BJ (cell line): ENCODE measurements at regions of chr2 and their contacts with region 1.

Region 1: DNA sequence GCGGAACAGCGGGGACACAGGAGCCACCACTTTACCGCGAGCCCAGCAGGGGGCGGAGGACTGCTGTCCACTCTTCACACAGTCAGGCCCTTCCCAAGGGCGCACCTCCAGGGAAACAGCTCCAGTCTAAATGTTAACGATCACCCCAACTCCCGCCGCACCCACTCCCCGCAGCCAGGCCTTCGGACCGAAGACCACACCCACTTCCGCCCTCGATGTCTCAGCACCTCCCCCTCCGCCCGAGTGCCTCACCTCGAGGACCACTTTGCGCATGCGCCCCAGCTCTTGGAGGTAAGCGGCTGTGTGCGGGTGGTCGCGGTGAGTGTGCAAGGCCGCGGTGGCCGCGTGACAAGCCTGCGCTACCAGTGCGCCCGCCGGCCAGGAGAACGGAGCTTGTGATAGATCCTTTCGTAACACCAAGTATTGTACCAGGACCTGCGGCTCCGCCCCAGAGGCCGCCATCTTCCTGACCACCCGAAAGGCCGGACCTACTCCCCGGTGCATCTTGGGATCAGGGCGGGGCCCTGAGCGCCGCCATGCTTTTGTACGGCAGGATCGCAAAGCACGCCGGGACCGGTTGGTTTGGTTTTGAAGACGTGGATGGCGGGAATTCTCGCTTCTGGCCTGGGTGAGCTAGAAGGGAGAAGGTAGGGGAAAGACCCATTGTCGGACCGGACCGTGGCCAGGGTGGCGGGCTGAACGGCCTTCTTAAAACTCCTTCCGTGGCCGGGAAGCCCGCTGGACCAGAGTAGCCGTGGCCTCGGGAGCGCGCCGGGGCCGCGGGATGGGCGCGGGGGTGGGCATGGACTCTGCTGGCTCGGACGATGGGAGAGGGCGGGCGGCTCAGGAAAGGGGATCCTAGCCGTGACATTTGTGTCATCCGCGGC is at the starts of genes CENPO and PTRHD1:
- DNase-seq: peak; percentile 78
- H3K4me3 ChIP-seq: peak within 1 kb of the TSS; percentile 80
- H3K27me3 ChIP-seq: no peaks in the 10 kb centered on the region
- CTCF ChIP-seq: peak; percentile 67
- polyA plus RNA-seq, gene CENPO: 18.2 and 19.4 TPM in 2 replicates
- polyA plus RNA-seq, gene PTRHD1: 44.5 and 59.2 TPM in 2 replicates

Region 2: DNA sequence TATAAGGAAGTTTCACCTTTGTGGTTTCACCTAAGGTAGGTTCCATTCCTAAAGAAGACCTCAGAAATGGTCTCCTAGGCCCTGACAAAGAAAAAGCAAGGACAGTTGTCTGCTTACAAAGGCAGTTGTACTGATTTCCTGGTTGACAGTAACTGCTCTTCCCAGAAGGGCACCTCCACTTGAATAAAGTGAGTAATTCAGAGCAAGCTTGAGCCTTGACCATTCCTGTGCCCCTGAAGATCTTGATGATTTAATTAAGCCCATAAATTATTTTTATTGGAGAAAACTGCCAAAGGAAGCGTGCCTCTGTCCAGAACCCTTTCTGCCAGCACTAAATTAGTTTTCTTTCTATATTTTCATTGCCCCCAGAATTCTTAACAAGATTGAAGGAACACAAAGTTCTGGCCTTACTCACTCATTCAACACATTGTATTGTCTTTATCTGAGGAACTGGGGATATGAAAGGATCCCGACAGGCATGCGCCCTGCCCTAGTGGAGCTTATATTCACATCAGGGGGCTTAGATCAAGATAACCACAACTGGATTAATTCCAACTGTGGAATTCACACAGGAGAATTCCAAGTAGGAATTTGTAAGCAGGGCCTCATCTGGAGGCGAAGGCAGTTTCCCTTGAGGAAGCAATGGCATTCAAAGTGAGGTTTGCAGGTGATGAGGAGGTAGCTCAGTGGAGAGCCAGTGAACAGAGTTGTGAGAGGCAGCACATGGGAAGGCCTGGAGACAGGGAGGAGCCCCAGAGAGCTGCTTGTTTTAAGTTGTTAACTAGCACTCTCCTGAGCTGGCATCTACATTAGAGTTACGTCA is 21.1 kb before region 1 on chr2:
- CTCF ChIA-PET with region 1: interaction called, 21 read pairs
- POLR2A ChIA-PET with region 1: no interaction called
- DNase-seq: no peak
- H3K4me3 ChIP-seq: no peak overlapping the region
- H3K27me3 ChIP-seq: no peaks in the 10 kb centered on the region
- CTCF ChIP-seq: no peak

Region 3: GRCh38 chr2:24779116-24779515 is 14.0 kb before region 1 on chr2:
- CTCF ChIA-PET with region 1: interaction called, 21 read pairs
- POLR2A ChIA-PET with region 1: no interaction called
- DNase-seq: no peak
- H3K4me3 ChIP-seq: no peak overlapping the region
- H3K27me3 ChIP-seq: no peaks in the 10 kb centered on the region
- CTCF ChIP-seq: no peak